Naive thymus-derived CD8-positive, alpha-beta T cell (primary cell): ENCODE measurements at regions of chr19 and their contacts with region 1.

Region 1: DNA sequence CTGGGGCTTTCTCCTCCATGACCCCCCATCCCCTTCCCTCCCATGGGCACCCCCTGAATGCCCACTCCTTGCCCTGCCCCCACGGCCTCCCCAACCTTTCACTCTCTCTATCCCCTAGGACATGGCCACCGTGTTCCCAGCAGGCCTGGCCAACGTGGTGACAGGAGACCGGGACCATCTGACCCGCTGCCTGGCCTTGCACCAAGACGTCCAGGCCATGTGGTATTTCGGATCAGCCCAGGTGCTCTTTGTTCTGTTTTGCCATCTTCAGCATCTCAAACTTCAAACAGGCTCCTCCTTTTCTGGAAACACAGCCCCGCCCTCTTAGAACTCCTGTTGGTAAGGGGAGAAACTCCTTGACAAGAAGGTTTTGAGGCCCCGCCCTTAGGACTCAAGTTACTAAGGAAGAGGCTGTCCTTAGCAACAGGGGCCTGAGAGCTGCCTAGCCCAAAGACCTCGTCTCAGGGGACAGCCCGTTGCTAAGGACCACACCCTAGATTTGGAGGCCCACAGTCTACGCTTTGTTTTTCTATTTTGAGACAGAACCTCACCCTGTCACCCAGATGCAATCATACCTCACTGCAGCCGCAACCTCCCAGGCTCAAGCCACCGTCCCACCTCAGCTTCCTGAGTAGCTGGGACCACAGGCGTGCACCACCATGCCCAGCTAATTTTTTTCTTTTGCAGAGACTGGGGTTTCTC is 5.1 kb upstream of the FLT3LG start:
- DNase-seq: peak; percentile 58 to 98 (median 92)
- ATAC-seq: peak; percentile 74 to 83
- H3K4me3 Mint-ChIP-seq: peak overlapping the region; percentile 52 to 98 (median 84)
- H3K27ac Mint-ChIP-seq: peak overlapping the region; percentile 98 to 100 (median 100)
- H3K4me1 Mint-ChIP-seq: peaks cover 14 to 59% (median 48%) of the 10 kb centered on the region in 4 donors
- H3K27me3 Mint-ChIP-seq: no peaks in the 10 kb centered on the region

Region 2: GRCh38 chr19:49391581-49392399 is 77.1 kb before region 1 on chr19:
- POLR2A ChIA-PET with region 1: interaction called, 17 read pairs
- DNase-seq: peak; percentile 65 to 89 (median 76)
- ATAC-seq: peak; percentile 86 to 87
- H3K4me3 Mint-ChIP-seq: no peak overlapping the region
- H3K27ac Mint-ChIP-seq: peak overlapping the region in 7 of 10 donors; percentile 4 to 87 (median 72)
- H3K4me1 Mint-ChIP-seq: peaks cover 9 to 24% (median 17%) of the 10 kb centered on the region in 4 donors
- H3K27me3 Mint-ChIP-seq: peaks cover 0 to 4% (median 0%) of the 10 kb centered on the region in 5 donors

Region 3: GRCh38 chr19:49443366-49444099 is 25.4 kb before region 1 on chr19:
- POLR2A ChIA-PET with region 1: interaction called, 321 read pairs
- DNase-seq: peak; percentile 85 to 98 (median 92)
- ATAC-seq: peak; percentile 90 to 92
- H3K4me3 Mint-ChIP-seq: peak overlapping the region; percentile 77 to 90 (median 84)
- H3K27ac Mint-ChIP-seq: peak overlapping the region; percentile 8 to 96 (median 91)
- H3K4me1 Mint-ChIP-seq: peaks cover 27 to 52% (median 44%) of the 10 kb centered on the region in 4 donors
- H3K27me3 Mint-ChIP-seq: peaks cover 30 to 44% (median 37%) of the 10 kb centered on the region in 5 donors